ENCODE measurements at regions of chr19 and their contacts with region 1.

Region 1: GRCh38 chr19:12052497-12053169 is at the start of gene ZNF878:
- DNase-seq: peak; percentile 76
- H3K4me3 Mint-ChIP-seq: peak within 1 kb of the TSS; percentile 71
- H3K27ac Mint-ChIP-seq: no peak within 1 kb of the TSS
- H3K4me1 Mint-ChIP-seq: peaks cover 9% of the 10 kb centered on the region
- H3K27me3 Mint-ChIP-seq: peaks cover 15% of the 10 kb centered on the region
- total RNA-seq, gene ZNF878: 0.57 to 0.80 TPM

Region 2: DNA sequence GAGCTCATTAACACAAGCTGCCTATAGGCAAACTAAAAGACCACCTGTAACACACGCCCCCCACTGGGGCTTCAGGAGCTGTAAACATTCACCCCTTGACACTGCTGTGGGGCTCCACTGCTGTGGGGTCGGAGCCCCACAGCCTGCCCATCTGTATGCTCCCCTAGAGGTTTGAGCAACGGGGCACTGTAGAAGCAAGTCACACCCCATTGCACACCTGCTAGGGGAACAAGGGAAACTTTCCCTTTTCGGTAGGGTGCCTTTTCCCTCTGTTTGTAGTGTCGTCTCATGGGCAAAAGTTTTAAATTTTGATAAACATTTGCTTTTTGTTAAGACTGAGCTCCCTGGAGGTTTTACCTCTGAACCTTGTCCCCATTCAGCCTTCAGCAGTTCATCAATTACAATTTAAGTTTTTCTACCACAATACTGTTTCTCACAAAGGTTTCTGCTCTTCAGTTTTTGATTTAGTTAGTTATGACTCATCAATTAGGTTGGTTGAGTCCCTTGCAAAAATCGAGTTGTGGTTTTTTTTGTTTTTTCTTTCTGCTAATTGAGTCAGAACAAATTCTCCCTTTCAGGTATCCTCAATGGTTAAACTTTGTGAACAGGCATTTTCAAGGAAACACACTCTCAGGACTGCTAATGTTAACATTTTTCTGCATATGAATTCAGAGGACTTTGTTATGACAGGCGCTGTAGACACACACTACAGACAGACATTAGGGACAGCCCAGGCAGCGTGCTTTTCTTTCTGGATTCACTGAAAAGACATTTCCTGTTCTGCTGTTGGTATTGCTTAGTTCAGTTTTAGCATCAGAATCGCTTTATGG is 52.3 kb before region 1 on chr19:
- CTCF ChIA-PET with region 1: interaction called, 4 read pairs
- POLR2A ChIA-PET with region 1: no interaction called
- intact Hi-C with region 1: loop called (anchors 2 kb)
- DNase-seq: peak; percentile 54
- H3K4me3 Mint-ChIP-seq: no peak overlapping the region
- H3K27ac Mint-ChIP-seq: peak overlapping the region; percentile 72
- H3K4me1 Mint-ChIP-seq: peaks cover 20% of the 10 kb centered on the region
- H3K27me3 Mint-ChIP-seq: no peaks in the 10 kb centered on the region